ENCODE measurements at regions of chr2 and their contacts with region 1.

Region 1: DNA sequence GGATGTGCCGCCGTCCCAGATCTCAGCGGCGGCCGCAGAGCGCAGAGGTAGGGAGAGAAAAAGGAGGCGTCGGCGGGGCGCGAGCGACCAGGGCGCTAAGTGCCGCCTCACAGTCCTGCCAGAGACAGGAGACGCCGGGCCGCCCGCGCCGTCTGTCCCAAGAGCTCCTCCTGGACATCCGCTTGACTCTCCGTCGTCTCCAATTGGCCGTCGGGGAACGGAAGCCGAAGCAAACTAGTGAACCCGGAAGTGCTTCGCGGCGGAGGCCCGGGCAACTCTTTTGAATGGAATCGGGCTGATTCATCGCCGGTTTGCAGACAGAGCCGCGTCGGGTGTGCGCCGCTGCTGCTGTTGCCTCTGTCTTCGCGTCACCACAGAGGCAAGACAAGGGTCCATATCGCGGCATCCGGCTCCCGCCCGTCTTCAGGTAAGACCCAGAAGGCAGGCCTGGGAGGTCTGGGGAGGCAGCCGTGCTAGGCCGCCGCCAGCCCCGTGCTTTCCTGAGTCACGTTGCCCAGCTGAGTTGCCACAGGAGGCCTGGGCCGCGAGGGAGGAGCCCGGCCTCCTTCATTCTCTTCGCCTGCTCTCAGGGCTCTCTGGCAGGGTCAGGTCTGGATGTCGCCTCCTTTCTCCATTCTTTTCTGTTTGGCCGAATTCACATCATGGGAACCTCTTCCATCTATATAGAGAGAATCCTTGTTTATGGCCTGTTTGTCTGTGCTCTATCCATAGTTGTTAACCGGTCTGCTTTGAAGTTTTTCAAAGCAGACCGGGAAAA is at the start of gene PSMD14:
- DNase-seq: peak; percentile 81 to 97
- H3K4me3 ChIP-seq: peak within 1 kb of the TSS; percentile 76 to 87
- H3K27ac ChIP-seq: peak within 1 kb of the TSS; percentile 71 to 76
- H3K4me1 ChIP-seq: no peaks in the 10 kb centered on the region
- H3K27me3 ChIP-seq: no peaks in the 10 kb centered on the region
- CTCF ChIP-seq: no peak
- total RNA-seq, gene PSMD14: 238 TPM

Region 2: DNA sequence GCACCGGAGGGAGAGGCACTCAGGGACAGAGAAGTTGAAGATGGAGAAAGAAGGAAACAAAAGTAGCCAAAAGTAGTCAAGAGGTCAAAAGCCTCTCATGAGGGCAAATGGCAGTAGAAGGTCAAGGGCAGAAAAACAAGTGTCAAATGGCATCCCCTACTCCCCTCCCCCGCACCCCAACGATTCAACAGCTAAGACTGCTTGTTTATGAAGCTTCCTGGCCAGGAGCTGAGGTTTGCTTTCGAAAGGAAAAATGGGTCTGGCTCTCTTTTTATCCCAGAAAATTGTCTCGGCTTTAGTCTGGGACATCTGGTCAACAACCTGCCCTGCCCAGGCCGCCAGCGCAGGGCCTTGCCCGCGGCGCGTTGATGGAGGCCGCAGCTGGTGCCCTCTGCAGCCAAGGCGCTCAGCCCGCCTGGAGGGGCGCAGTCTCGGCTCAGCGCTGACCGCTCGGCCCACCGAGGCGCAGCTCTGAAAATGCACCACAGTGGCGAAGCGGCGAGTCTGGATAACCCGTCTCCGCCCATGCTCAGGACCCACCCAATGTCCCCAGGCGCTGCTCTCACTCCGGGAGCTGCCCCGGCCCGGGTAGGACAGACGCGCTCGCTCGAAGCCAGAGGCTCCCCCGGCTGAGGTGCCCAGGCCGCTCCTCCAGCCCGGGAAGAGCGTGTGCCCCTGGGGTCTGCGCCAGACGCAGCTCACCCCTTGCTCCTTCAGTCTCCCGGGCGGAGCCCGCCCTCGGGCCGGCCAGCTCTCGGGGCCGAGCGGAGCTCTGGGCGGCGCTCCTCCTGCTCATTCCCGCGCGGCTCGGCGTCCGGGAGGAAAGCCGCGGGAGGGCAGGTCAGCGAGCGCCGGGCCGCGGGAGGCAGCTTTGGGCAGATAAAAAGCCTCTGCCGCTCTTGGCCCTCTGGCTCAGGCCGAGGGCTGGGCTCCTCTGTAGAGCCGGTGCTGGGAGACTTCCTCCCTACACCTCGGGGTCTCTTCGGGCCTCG is 106.0 kb after region 1 on chr2:
- intact Hi-C with region 1: loop called (anchors 5 kb)
- DNase-seq: no peak
- H3K4me3 ChIP-seq: peak overlapping the region; percentile 47 to 66
- H3K27ac ChIP-seq: no peak overlapping the region
- H3K4me1 ChIP-seq: peaks cover 3 to 31% of the 10 kb centered on the region in 2 donors
- H3K27me3 ChIP-seq: peaks cover 26% of the 10 kb centered on the region
- CTCF ChIP-seq: peak in 1 of 3 experiments; percentile 6